ENCODE measurements at regions of chr9 and their contacts with region 1.

Region 1: GRCh38 chr9:118230319-118230718 is 526.1 kb downstream of the TLR4 start:
- DNase-seq: no peak
- ATAC-seq: no peak
- H3K4me3 ChIP-seq: no peak overlapping the region
- H3K27ac ChIP-seq: no peak overlapping the region
- H3K4me1 ChIP-seq: no peaks in the 10 kb centered on the region
- H3K27me3 ChIP-seq: no peaks in the 10 kb centered on the region; a peak in 1 of 4 replicates
- CTCF ChIP-seq: no peak
- EP300 ChIP-seq: no peak
- POLR2A ChIP-seq: no peak
- RAD21 ChIP-seq: no peak

Region 2: GRCh38 chr9:118209343-118209742 is 21.0 kb before region 1 on chr9:
- CTCF ChIA-PET with region 1: no interaction called
- POLR2A ChIA-PET with region 1: no interaction called
- RAD21 ChIA-PET with region 1: no interaction called
- SMC1A ChIA-PET with region 1: no interaction called
- in situ Hi-C with region 1: no loop called
- intact Hi-C with region 1: no loop called
- DNase-seq: no peak
- ATAC-seq: no peak
- H3K4me3 ChIP-seq: no peak overlapping the region
- H3K27ac ChIP-seq: no peak overlapping the region
- H3K4me1 ChIP-seq: no peaks in the 10 kb centered on the region
- H3K27me3 ChIP-seq: no peaks in the 10 kb centered on the region
- CTCF ChIP-seq: no peak
- EP300 ChIP-seq: no peak
- POLR2A ChIP-seq: no peak
- RAD21 ChIP-seq: no peak

Region 3: GRCh38 chr9:118295413-118295812 is 65.1 kb after region 1 on chr9:
- CTCF ChIA-PET with region 1: no interaction called
- POLR2A ChIA-PET with region 1: no interaction called
- RAD21 ChIA-PET with region 1: no interaction called
- SMC1A ChIA-PET with region 1: no interaction called
- in situ Hi-C with region 1: no loop called
- intact Hi-C with region 1: loop called (anchors 10 kb)
- DNase-seq: no peak
- ATAC-seq: no peak
- H3K4me3 ChIP-seq: no peak overlapping the region
- H3K27ac ChIP-seq: no peak overlapping the region
- H3K4me1 ChIP-seq: no peaks in the 10 kb centered on the region
- H3K27me3 ChIP-seq: no peaks in the 10 kb centered on the region
- CTCF ChIP-seq: no peak
- EP300 ChIP-seq: no peak
- POLR2A ChIP-seq: no peak
- RAD21 ChIP-seq: no peak